ENCODE measurements at regions of chr2 and their contacts with region 1.

Region 1: DNA sequence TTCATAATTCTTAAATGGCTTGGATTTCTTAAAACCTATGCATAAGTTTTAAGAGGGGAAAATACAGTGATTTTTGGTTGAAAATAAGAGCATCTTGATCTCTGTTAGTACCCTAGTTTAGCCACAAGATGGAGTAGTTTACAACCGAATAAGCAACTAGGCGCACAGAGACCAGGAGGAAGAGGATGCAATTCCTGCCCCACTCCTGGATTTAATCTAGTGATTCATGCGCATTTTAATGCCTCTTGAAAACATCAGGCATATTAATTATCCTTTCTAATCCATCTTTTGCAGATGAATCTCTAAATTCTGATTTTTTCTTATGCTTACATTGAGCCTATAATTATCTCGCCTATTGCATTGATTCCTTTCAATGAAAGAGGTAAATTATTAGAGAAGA is 76.7 kb downstream of the MRPS9 start:
- DNase-seq: peak in 1 of 2 donors; percentile 74
- H3K4me3 ChIP-seq: no peak overlapping the region
- H3K27ac ChIP-seq: no peak overlapping the region
- H3K4me1 ChIP-seq: no peaks in the 10 kb centered on the region
- H3K27me3 ChIP-seq: no peaks in the 10 kb centered on the region
- CTCF ChIP-seq: peak in 5 of 7 experiments; percentile 34 to 74 (median 62)
- EP300 ChIP-seq: no peak
- POLR2A ChIP-seq: no peak

Region 2: DNA sequence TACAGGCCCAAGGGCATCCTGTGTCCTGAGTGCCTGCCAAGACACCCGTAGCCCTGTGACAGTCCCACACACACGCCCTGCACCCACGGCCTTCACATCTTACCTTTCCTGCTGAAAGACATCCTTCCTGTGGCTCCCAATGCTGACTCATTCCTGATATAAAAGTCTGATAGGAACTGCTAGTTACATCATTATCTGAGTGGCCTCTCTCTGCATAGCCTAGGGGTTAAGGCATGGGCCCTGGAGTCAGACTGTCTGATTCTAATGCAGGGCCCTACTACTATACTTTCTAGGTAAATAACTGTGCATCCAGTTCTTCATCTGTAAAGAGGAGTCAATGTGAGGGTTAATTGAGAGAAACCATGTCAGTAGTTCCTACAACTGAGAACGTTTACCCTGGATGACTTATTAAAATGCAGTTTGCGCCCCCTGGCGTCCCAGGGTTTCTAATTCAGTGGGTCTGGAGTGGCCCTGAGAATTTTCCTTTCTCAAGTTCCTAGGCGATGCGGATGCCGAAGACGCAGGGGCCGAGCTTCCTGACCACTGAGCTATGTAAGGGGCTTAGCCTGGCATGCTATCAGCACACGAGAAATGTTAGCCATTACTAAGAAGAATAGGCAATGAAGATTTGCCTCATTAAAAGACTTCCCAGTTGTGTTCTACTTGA is 121.0 kb after region 1 on chr2:
- intact Hi-C with region 1: loop called (anchors 5 kb)
- DNase-seq: peak; percentile 85 to 91
- H3K4me3 ChIP-seq: no peak overlapping the region
- H3K27ac ChIP-seq: no peak overlapping the region
- H3K4me1 ChIP-seq: peaks cover 0 to 26% (median 4%) of the 10 kb centered on the region in 4 donors
- H3K27me3 ChIP-seq: peaks cover 0 to 17% (median 0%) of the 10 kb centered on the region in 3 donors
- CTCF ChIP-seq: peak in 4 of 7 experiments; percentile 47 to 63 (median 58)
- EP300 ChIP-seq: no peak
- POLR2A ChIP-seq: no peak

Region 3: DNA sequence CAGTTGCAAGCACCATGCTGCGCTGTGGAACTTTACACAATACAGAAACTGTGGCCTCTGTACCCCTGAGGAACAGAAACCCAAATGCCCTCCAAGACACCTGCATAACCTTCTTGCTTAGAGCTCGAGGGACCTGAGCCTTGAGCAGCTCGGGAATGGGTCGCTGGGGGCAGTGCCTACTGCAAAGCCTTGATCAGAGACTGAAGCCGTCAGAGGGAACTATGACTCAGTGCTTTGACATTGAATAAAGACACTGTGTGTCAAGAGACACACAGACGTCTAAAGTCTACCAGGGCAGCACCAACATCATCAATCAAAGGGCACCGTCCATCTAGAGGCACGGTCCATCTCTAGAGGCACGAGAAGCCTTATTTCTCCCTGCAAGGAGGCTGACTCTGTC is 157.6 kb after region 1 on chr2:
- intact Hi-C with region 1: no loop called
- DNase-seq: no peak
- H3K4me3 ChIP-seq: no peak overlapping the region
- H3K27ac ChIP-seq: no peak overlapping the region
- H3K4me1 ChIP-seq: no peaks in the 10 kb centered on the region
- H3K27me3 ChIP-seq: no peaks in the 10 kb centered on the region
- CTCF ChIP-seq: no peak
- EP300 ChIP-seq: no peak
- POLR2A ChIP-seq: no peak

Measured in stomach (tissue), 19 donors.